Transverse colon (tissue), 4 donors: ENCODE measurements at regions of chr2 and their contacts with region 1.

Region 1: GRCh38 chr2:144690771-144691170 is 170.9 kb upstream of the ZEB2 start:
- DNase-seq: no peak
- H3K4me3 ChIP-seq: no peak overlapping the region
- H3K27ac ChIP-seq: no peak overlapping the region
- H3K4me1 ChIP-seq: no peaks in the 10 kb centered on the region
- H3K27me3 ChIP-seq: no peaks in the 10 kb centered on the region
- CTCF ChIP-seq: no peak
- EP300 ChIP-seq: no peak
- POLR2A ChIP-seq: no peak

Region 2: GRCh38 chr2:143442193-143442592 is 1248.6 kb before region 1 on chr2:
- in situ Hi-C with region 1: no loop called
- intact Hi-C with region 1: no loop called
- DNase-seq: no peak
- H3K4me3 ChIP-seq: no peak overlapping the region
- H3K27ac ChIP-seq: peak overlapping the region in 2 of 4 donors; percentile 34 to 53
- H3K4me1 ChIP-seq: no peaks in the 10 kb centered on the region
- H3K27me3 ChIP-seq: no peaks in the 10 kb centered on the region
- CTCF ChIP-seq: no peak
- EP300 ChIP-seq: no peak
- POLR2A ChIP-seq: no peak

Region 3: DNA sequence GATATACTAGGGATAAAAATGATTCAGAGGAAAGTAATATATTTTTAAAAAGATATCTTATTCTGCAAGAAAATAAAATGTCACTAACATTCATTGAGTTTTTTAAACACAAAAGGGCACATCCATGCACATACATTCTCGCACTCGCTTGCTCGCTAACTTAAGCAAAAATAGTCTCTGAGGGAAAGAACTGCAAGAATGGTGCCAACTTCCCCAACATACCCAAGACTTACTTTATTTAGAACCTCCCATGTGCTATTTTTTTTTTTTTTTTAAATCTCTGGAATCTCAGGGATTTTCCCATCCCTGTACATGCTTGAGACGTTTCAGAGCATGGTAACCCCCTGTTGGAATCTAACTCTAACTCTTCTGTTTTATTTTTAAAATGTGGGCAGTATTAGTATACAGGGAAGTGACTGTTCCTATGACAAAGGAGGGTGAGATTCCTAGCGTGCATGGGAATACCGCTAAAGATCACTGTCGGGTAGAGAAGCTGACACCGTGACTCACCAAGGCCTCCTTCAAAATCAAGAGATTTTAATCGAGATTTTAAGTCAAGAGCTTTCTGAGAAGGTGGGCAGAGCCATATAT is 17.1 kb after region 1 on chr2:
- in situ Hi-C with region 1: no loop called
- intact Hi-C with region 1: loop called (anchors 2 kb)
- DNase-seq: no peak
- H3K4me3 ChIP-seq: no peak overlapping the region
- H3K27ac ChIP-seq: no peak overlapping the region
- H3K4me1 ChIP-seq: peaks cover 0 to 7% (median 0%) of the 10 kb centered on the region in 4 donors
- H3K27me3 ChIP-seq: no peaks in the 10 kb centered on the region
- CTCF ChIP-seq: no peak
- EP300 ChIP-seq: no peak
- POLR2A ChIP-seq: no peak